ENCODE measurements at regions of chr7 and their contacts with region 1.

Region 1: DNA sequence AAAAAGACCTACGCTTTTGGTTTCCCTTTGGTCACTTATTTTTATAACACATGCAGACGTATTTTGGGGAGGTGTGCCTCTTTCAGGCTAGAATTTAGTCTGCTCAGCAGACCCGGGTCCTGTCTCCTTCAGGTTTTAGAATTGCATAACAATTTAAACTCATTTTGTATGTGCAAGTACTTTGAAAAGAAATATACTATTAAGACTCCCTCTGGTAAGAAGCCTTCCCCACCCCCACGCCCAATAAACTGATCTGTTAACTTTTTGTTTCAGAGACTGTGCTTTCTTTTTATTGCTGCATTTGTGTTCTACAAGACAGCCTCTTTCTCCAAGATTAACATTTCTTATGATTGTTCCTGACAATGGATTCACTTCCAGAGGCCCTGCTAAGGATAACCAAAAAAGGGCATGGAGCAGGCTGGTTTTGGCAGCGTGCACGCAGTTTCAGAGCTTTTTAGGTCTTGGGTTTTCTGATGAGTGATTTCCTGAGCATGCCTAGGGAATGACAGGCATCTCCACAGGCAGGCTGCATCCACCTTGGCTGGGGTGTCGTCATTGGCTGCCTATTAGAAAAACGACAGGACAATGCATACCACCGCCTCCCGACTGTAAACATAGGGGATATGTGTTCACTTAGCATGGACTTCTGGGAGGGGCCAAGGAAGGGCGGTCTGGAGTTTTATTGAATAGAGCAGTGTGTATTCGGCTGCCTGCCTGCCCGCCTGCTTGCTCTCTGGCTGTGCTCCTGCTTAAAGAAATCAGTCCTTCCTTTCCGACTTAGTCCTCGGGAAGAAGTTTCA is at the start of gene CALD1:
- DNase-seq: peak; percentile 96
- ATAC-seq: peak; percentile 95
- H3K4me3 ChIP-seq: peak within 1 kb of the TSS; percentile 70
- H3K27ac ChIP-seq: peak within 1 kb of the TSS; percentile 45
- H3K4me1 ChIP-seq: peaks cover 29% of the 10 kb centered on the region
- H3K27me3 ChIP-seq: no peaks in the 10 kb centered on the region
- CTCF ChIP-seq: no peak
- total RNA-seq, gene CALD1: 22.1 and 42.4 TPM in 2 replicates

Region 2: GRCh38 chr7:134646425-134647305 is 132.5 kb before region 1 on chr7 and contains the start of gene BPGM:
- CTCF ChIA-PET with region 1: no interaction called
- POLR2A ChIA-PET with region 1: interaction called, 3 read pairs
- intact Hi-C with region 1: loop called (anchors 5 kb)
- DNase-seq: peak; percentile 99
- ATAC-seq: peak; percentile 99
- H3K4me3 ChIP-seq: peak within 1 kb of the TSS; percentile 95
- H3K27ac ChIP-seq: peak within 1 kb of the TSS; percentile 34
- H3K4me1 ChIP-seq: peaks cover 10% of the 10 kb centered on the region
- H3K27me3 ChIP-seq: no peaks in the 10 kb centered on the region
- CTCF ChIP-seq: peak; percentile 45
- total RNA-seq, gene BPGM: 9.6 and 14.6 TPM in 2 replicates

Region 3: DNA sequence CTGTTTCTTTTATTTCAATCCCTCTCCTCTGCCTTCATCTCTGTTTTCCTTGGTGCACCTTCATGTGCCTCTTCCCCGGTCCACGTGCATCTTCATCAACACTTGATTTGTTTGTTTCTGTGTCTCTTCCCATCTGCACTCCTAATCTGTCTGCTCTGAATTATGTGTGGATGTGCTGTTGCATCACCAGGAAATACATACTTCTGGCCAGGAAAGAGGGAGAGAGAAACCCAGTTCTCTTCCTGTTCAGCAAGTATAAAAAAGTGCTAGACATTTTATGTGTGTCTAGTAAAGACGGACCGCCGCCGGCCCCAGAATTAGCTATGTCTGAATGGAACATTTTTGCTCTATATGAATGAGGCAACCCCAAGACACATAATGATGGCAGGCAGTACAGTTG is 94.1 kb after region 1 on chr7:
- CTCF ChIA-PET with region 1: no interaction called
- POLR2A ChIA-PET with region 1: no interaction called
- intact Hi-C with region 1: loop called (anchors 10 kb)
- DNase-seq: no peak
- ATAC-seq: no peak
- H3K4me3 ChIP-seq: no peak overlapping the region
- H3K27ac ChIP-seq: no peak overlapping the region
- H3K4me1 ChIP-seq: peaks cover 4% of the 10 kb centered on the region; the same call in 1 of the 2 replicates
- H3K27me3 ChIP-seq: no peaks in the 10 kb centered on the region
- CTCF ChIP-seq: no peak

Region 4: DNA sequence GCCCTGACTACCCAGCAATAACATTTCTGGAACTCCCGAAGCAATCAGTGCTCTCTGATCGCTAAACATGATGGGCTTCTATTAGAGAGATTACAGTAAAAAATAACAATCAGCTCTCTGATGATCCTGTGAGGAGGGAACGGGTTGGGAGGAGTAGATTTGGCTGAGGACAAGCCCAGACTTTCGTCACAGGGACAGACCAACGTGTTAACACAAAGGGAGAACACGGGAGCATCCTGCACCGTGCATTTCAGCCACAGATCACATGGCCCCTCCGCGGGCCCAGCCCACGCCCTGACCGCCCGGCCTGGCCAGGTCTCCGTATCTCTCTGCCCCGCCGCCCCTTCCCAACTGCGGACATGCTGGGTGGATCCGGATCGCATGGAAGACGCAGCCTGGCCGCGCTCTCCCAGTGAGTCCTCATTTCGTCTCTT is 112.1 kb after region 1 on chr7:
- CTCF ChIA-PET with region 1: no interaction called
- POLR2A ChIA-PET with region 1: interaction called, 6 read pairs
- intact Hi-C with region 1: loop called (anchors 1 kb)
- DNase-seq: peak; percentile 92
- ATAC-seq: peak; percentile 96
- H3K4me3 ChIP-seq: peak overlapping the region; percentile 81
- H3K27ac ChIP-seq: peak overlapping the region; percentile 65
- H3K4me1 ChIP-seq: peaks cover 22% of the 10 kb centered on the region
- H3K27me3 ChIP-seq: no peaks in the 10 kb centered on the region
- CTCF ChIP-seq: no peak

Region 5: DNA sequence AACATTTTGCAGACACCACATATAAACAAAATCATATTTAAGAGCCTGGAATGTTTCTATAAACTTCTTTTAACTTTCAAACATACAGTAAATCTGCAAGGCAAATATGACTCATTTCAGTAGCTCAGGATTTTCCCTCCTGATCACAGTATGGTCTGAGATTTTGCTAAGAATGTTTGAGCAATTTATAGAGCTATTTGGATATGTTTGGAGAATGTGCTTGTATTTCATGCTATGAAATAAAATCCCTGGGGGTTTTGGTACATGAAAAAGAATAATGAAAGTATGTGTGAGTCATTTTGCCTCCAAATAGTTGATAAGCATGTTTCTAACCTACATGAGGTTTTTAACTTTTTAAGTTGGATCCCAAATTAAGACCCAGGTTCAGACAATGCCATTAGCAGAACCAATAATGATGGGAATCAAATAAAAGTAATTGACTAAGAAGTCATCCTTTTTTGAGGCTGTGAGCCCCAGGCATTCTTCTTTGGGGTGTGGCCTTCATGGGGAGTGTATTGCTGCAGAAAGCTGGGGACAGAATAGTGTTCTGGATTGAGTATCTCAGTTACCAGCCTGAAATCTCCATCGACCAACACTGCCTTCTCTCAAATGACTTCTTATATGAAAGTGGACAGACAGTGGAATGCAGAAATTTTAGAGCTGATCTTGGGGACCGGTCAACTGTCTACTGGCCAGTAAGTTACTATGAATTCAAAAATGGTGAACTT is 141.0 kb after region 1 on chr7:
- CTCF ChIA-PET with region 1: no interaction called
- POLR2A ChIA-PET with region 1: no interaction called
- intact Hi-C with region 1: loop called (anchors 1 kb)
- DNase-seq: peak; percentile 80
- ATAC-seq: peak; percentile 93
- H3K4me3 ChIP-seq: no peak overlapping the region
- H3K27ac ChIP-seq: peak overlapping the region; percentile 35
- H3K4me1 ChIP-seq: peaks cover 18% of the 10 kb centered on the region
- H3K27me3 ChIP-seq: no peaks in the 10 kb centered on the region
- CTCF ChIP-seq: no peak

Region 6: GRCh38 chr7:134943764-134944400 is 164.7 kb after region 1 on chr7:
- CTCF ChIA-PET with region 1: no interaction called
- POLR2A ChIA-PET with region 1: no interaction called
- intact Hi-C with region 1: loop called (anchors 5 kb)
- DNase-seq: peak; percentile 74
- ATAC-seq: peak; percentile 96
- H3K4me3 ChIP-seq: no peak overlapping the region
- H3K27ac ChIP-seq: no peak overlapping the region
- H3K4me1 ChIP-seq: no peaks in the 10 kb centered on the region
- H3K27me3 ChIP-seq: no peaks in the 10 kb centered on the region
- CTCF ChIP-seq: peak; percentile 78